ENCODE measurements at regions of chr12 and their contacts with region 1.

Region 1: GRCh38 chr12:49161092-49161795 is 27.6 kb downstream of the TUBA1A start:
- DNase-seq: no peak
- H3K4me3 ChIP-seq: no peak overlapping the region
- H3K27ac ChIP-seq: no peak overlapping the region
- H3K4me1 ChIP-seq: no peaks in the 10 kb centered on the region
- H3K27me3 ChIP-seq: no peaks in the 10 kb centered on the region
- CTCF ChIP-seq: no peak

Region 2: DNA sequence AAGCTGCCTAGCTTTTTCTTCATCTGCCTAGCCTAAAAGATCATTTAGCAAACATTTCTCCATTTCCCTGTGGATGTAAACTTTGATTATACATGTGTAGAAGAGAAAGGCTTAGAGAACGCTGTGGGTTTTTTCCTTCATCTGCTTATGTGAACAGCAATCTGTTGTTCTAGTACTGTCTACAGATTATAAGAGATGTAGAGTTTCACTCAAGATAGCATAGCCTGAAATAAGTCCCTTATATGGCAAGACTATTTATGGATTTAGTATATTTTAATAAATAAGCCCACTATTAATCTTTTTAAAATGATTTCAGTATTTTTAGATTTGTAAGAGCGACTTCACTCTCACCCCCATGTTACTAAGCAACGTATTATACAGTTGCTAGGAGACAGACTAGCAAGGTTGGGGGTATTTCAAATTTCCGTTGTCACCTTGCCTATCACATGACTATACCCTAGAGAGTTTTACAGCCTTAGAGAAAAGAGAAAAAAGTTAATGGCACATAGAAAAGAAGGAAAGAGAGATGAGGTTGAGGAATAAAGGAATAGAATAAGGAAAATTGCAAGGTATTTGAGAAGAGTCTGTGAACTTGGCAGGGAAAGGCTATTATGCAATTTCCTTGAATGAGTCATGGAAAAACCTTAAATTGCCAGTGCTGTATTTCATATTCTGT is 39.8 kb after region 1 on chr12:
- CTCF ChIA-PET with region 1: no interaction called
- dilution Hi-C with region 1: loop called (anchors 5 kb)
- in situ Hi-C with region 1: no loop called
- intact Hi-C with region 1: no loop called
- DNase-seq: peak; percentile 76
- H3K4me3 ChIP-seq: peak overlapping the region in 1 of 3 experiments; percentile 11
- H3K27ac ChIP-seq: peak overlapping the region; percentile 96
- H3K4me1 ChIP-seq: peaks cover 21% of the 10 kb centered on the region
- H3K27me3 ChIP-seq: no peaks in the 10 kb centered on the region
- CTCF ChIP-seq: no peak

Region 3: GRCh38 chr12:49664591-49665239 is 503.5 kb after region 1 on chr12:
- CTCF ChIA-PET with region 1: no interaction called
- dilution Hi-C with region 1: no loop called
- in situ Hi-C with region 1: no loop called
- intact Hi-C with region 1: no loop called
- DNase-seq: no peak
- H3K4me3 ChIP-seq: no peak overlapping the region
- H3K27ac ChIP-seq: no peak overlapping the region
- H3K4me1 ChIP-seq: peaks cover 14% of the 10 kb centered on the region
- H3K27me3 ChIP-seq: no peaks in the 10 kb centered on the region
- CTCF ChIP-seq: no peak

Measured in mammary epithelial cell (primary cell).